ENCODE measurements at regions of chr2 and their contacts with region 1.

Region 1: DNA sequence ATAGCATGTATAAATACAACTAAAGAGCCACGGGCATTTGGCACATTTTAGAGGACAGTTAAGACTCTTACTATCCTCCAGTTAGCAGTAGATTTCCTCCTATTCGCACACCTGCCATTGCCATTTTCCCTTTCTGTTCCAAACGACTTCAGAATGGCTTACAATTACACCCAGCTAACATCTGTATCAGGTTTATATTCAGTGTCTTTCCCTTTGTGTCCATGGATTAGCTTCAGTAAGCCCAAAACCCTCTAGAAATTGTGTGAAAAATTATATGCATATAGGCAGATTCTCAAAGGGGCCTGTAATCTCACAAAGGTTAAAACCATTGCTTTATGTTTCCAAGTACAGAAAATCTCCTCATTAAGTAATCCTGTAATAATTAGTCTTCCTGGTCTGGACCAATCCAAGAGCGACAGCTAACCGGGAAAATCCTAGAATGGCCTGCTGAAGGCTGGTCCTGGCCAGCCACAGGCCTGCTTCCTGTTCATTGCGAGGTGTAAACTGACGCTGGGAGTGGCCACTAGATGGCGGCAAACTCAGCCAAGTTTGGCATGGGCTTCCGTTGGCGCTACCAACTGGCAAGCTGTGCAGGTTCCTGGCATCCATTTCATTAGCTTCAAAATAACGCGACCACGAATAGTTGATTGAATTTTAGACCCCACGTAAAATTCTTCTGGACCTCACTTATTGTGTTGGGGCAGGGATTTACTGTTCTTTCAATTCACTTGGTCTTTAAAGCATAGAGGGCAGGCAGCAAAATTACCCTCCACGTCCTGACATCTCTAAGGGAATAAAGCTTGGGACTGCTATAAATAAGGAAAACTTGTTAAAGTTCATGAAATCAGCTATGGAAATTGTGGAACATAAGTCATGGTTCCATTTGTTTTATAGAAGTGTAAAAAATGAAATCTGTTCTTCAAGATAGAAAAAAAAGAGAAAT is 17.1 kb downstream of the ARHGAP25 start:
- DNase-seq: peak; percentile 81 to 86
- H3K4me3 ChIP-seq: no peak overlapping the region
- H3K4me3 Mint-ChIP-seq: no peak overlapping the region
- H3K27ac Mint-ChIP-seq: no peak overlapping the region
- H3K4me1 ChIP-seq: no peaks in the 10 kb centered on the region
- H3K4me1 Mint-ChIP-seq: no peaks in the 10 kb centered on the region
- H3K27me3 ChIP-seq: no peaks in the 10 kb centered on the region
- H3K27me3 Mint-ChIP-seq: peaks cover 3% of the 10 kb centered on the region
- CTCF ChIP-seq: peak; percentile 92 to 95

Region 2: GRCh38 chr2:68837164-68837860 is 85.6 kb after region 1 on chr2:
- CTCF ChIA-PET with region 1: no interaction called
- POLR2A ChIA-PET with region 1: no interaction called
- intact Hi-C with region 1: loop called (anchors 5 kb)
- DNase-seq: peak in 1 of 2 experiments; percentile 11
- H3K4me3 ChIP-seq: no peak overlapping the region
- H3K4me3 Mint-ChIP-seq: no peak overlapping the region
- H3K27ac Mint-ChIP-seq: no peak overlapping the region
- H3K4me1 ChIP-seq: no peaks in the 10 kb centered on the region
- H3K4me1 Mint-ChIP-seq: no peaks in the 10 kb centered on the region
- H3K27me3 ChIP-seq: no peaks in the 10 kb centered on the region
- H3K27me3 Mint-ChIP-seq: no peaks in the 10 kb centered on the region
- CTCF ChIP-seq: peak in 1 of 2 experiments; percentile 18

Region 3: GRCh38 chr2:68901199-68901960 is 149.7 kb after region 1 on chr2:
- CTCF ChIA-PET with region 1: interaction called, 4 read pairs
- POLR2A ChIA-PET with region 1: no interaction called
- intact Hi-C with region 1: loop called (anchors 1 kb)
- DNase-seq: peak in 1 of 2 experiments; percentile 35
- H3K4me3 ChIP-seq: no peak overlapping the region
- H3K4me3 Mint-ChIP-seq: no peak overlapping the region
- H3K27ac Mint-ChIP-seq: no peak overlapping the region
- H3K4me1 ChIP-seq: no peaks in the 10 kb centered on the region
- H3K4me1 Mint-ChIP-seq: no peaks in the 10 kb centered on the region
- H3K27me3 ChIP-seq: no peaks in the 10 kb centered on the region
- H3K27me3 Mint-ChIP-seq: peaks cover 9% of the 10 kb centered on the region
- CTCF ChIP-seq: peak; percentile 37 to 43

Region 4: GRCh38 chr2:68909793-68910674 is 158.4 kb after region 1 on chr2:
- CTCF ChIA-PET with region 1: interaction called, 8 read pairs
- POLR2A ChIA-PET with region 1: no interaction called
- intact Hi-C with region 1: loop called (anchors 1 kb)
- DNase-seq: peak; percentile 68 to 76
- H3K4me3 ChIP-seq: no peak overlapping the region
- H3K4me3 Mint-ChIP-seq: no peak overlapping the region
- H3K27ac Mint-ChIP-seq: no peak overlapping the region
- H3K4me1 ChIP-seq: no peaks in the 10 kb centered on the region
- H3K4me1 Mint-ChIP-seq: no peaks in the 10 kb centered on the region
- H3K27me3 ChIP-seq: no peaks in the 10 kb centered on the region
- H3K27me3 Mint-ChIP-seq: no peaks in the 10 kb centered on the region
- CTCF ChIP-seq: peak; percentile 85 to 96

Region 5: DNA sequence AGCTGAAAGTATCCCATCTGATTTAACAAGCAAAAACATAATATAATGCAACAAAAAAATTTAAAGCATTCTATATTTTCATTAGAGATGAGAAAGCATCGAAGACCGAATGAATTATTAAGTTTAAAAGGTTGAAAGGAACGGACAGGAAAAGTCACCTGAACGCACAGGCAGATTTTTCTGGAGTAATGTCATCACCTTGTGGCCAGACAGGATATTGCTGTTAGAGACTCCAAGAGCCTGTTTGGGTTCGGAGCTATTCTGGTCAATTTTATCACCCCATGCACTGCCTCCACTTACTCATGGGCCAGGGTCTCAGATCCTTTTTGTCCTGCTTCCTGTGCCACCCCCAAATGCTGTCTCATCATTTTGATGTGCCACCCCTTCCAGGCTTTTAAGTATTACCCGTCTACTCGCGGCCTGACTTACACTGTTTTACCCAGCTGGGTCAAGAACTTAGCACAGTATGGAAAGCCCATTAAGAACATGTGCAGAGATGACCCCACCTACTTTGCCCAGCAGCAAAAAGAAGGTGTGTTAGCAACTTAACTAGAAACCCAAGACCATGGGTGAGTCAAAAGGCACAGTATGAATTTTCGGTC is 173.7 kb after region 1 on chr2:
- CTCF ChIA-PET with region 1: interaction called, 19 read pairs
- POLR2A ChIA-PET with region 1: no interaction called
- intact Hi-C with region 1: loop called (anchors 1 kb)
- DNase-seq: peak in 1 of 2 experiments; percentile 63
- H3K4me3 ChIP-seq: no peak overlapping the region
- H3K4me3 Mint-ChIP-seq: no peak overlapping the region
- H3K27ac Mint-ChIP-seq: no peak overlapping the region
- H3K4me1 ChIP-seq: no peaks in the 10 kb centered on the region
- H3K4me1 Mint-ChIP-seq: no peaks in the 10 kb centered on the region
- H3K27me3 ChIP-seq: no peaks in the 10 kb centered on the region
- H3K27me3 Mint-ChIP-seq: peaks cover 10% of the 10 kb centered on the region
- CTCF ChIP-seq: peak; percentile 87 to 88

Measured in Caco-2 (cell line).